ENCODE measurements at regions of chr16 and their contacts with region 1.

Region 1: GRCh38 chr16:88977018-88977811 is at the start of gene CBFA2T3:
- DNase-seq: peak; percentile 84
- H3K4me3 ChIP-seq: no peak within 1 kb of the TSS
- H3K27ac ChIP-seq: no peak within 1 kb of the TSS
- H3K4me1 ChIP-seq: peaks cover 4% of the 10 kb centered on the region
- H3K27me3 ChIP-seq: no peaks in the 10 kb centered on the region
- CTCF ChIP-seq: no peak
- POLR2A ChIP-seq: no peak
- total RNA-seq, gene CBFA2T3: not detected in 2 replicates

Region 2: GRCh38 chr16:89004209-89004831 is 27.1 kb after region 1 on chr16:
- CTCF ChIA-PET with region 1: no interaction called
- POLR2A ChIA-PET with region 1: no interaction called
- dilution Hi-C with region 1: no loop called
- intact Hi-C with region 1: loop called (anchors 1 kb)
- DNase-seq: peak; percentile 93
- H3K4me3 ChIP-seq: no peak overlapping the region
- H3K27ac ChIP-seq: no peak overlapping the region
- H3K4me1 ChIP-seq: no peaks in the 10 kb centered on the region
- H3K27me3 ChIP-seq: peaks cover 0 to 4% of the 10 kb centered on the region in 2 experiments
- CTCF ChIP-seq: no peak
- POLR2A ChIP-seq: no peak

Measured in endothelial cell of umbilical vein (primary cell).